Posterior vena cava (tissue), 2 donors: ENCODE measurements at regions of chr2 and their contacts with region 1.

Region 1: DNA sequence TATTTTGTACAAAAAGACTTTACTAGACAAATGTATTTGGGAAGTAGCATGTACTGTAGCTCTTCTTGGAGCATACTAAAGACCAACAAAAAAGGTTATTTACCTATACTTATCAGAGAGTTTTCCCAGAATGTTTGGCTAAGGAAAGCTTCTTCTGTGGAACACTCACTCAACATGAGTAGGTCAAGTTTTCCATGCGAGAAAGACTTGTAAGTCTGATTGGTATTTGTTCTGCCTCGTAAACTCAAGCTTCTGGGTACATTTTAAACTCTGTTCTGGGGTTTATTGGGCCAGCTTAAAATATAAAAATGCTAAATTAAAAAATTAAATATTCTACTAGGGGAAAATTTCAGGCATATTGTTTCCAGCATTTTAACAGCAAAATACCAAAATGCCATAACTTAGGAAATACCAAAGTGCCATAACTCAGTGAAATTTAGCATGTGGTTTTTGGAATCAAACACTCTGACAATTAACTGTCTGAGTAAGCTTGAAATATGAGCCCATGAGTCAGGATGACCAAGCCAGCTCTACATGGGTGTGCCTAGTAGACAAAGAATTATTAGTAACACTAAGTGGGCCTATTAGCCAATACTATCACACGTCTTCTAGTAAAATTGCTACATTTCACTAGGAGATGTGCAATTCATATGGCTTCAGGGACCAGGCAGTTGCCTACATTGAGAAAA is 47.3 kb upstream of the SERPINE2 start:
- DNase-seq: no peak

Region 2: DNA sequence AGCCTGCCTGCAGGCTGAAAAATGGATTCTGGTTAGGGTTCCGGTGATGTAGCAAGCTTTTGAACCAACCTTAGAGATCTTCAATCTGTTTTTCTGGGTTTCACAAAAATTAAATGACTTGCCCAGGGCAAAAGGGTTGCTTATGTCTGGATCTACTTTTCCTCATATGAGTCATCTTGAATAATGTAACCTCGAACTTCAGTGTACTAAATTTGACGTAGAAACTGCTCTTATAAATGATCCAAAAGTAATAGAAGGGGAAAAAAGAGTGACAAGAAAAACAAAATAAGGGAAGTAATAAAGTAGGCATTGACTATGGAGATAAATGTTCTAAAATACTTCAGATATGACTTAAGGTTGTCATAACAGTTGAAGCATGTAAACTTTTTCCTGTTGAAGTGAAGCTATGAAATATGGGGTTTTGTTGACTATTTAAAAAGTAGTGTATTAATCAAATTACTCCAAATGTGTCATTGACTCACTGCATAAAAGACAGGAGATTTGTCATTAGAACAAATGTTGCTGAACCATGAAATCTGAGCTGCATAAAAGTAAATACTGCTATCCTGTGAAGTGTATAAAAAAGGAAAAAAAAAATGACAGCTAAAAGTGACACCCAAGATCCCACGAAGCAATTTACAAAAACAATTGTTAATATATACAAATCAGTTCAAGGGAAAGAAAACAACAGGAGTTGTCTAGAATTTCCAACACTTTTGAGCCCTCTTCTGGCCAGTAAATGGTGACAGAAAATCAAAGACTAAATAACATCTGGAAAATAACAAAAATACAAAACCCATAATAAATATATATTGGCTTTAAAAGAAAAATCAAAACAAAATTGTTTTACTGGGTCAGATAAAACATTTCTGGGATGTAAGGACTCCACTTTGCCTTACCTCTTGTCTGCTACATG is 56.3 kb after region 1 on chr2:
- intact Hi-C with region 1: loop called in 1 of 2 experiments (anchors 2 kb)
- DNase-seq: no peak